Calu3 (cell line): ENCODE measurements at regions of chr4 and their contacts with region 1.

Region 1: DNA sequence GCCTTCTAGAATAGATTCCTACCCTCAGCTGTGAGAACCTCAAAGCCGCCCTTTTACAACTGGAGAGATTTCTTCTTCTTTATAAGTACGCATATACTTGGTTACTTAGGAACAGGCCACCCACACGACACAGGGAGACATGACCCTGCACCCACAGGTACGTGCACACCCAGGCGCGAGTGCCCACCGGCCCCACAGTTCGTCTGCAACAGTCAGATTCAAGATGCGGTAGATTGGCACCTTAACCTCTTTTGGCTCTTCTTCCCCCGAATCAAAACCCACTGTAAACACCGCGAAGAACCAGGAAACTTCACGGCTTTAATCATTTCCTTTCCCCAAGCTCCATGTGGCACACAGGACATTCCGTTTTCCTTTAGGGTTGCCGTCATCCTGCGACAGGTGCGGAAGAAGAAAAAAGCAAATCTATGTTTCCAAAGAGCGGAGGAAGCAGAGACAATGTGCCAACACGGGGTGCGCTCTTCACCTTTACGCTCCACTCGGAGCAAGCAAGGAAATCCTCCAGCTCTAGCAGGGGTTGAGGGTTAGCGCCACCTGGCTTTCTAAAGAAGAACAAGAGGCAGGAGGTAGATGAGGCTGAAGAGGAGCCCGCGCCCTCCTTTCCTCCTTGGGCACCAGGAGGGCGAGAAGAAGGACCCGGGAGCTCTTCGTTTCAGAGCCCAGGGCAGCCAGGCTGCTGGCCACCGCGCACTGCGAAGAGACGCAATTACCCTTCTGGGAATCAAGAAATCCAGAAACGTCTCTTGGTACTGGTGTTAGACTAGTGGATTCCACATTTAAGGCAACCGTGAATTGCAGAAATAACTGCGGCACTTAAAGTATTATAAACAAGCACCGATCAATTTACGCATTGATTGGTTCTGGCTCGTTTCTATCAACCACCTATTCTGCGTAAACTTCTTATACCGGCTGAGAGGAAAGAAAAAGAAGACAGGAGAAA is 35.7 kb downstream of the HAND2 start:
- DNase-seq: peak; percentile 58
- H3K4me3 Mint-ChIP-seq: peak overlapping the region; percentile 79
- H3K27ac Mint-ChIP-seq: no peak overlapping the region
- H3K4me1 Mint-ChIP-seq: peaks cover 14% of the 10 kb centered on the region
- H3K27me3 Mint-ChIP-seq: no peaks in the 10 kb centered on the region
- CTCF ChIP-seq: peak; percentile 71

Region 2: DNA sequence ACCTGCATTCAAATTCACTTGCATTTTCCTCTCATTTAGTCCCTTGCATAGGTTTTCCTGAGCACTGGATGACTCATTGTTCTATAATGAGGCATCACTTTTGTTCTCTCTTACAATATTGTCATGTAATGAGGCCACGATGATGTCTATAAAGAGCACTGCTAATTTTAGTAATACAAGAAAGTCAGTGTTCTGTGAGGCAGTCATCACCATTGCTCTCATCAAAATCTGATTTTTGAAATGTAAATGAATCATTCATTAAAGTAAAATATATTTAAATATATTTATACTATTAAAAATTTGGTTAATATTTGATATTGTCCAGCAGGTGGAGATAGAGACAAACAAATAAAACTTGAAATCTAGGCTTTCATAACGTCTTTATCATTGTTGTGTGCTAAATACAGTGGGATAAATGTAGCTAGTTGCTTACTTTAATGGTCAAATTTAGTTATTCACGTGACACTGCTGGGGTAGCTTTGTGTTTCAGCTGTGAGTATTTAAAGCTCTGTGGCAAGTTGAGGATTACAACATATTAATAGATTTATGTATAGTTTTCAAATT is 175.6 kb before region 1 on chr4:
- CTCF ChIA-PET with region 1: no interaction called
- intact Hi-C with region 1: loop called (anchors 1 kb)
- DNase-seq: no peak
- H3K4me3 Mint-ChIP-seq: no peak overlapping the region
- H3K27ac Mint-ChIP-seq: no peak overlapping the region
- H3K4me1 Mint-ChIP-seq: no peaks in the 10 kb centered on the region
- H3K27me3 Mint-ChIP-seq: no peaks in the 10 kb centered on the region
- CTCF ChIP-seq: peak; percentile 11

Region 3: DNA sequence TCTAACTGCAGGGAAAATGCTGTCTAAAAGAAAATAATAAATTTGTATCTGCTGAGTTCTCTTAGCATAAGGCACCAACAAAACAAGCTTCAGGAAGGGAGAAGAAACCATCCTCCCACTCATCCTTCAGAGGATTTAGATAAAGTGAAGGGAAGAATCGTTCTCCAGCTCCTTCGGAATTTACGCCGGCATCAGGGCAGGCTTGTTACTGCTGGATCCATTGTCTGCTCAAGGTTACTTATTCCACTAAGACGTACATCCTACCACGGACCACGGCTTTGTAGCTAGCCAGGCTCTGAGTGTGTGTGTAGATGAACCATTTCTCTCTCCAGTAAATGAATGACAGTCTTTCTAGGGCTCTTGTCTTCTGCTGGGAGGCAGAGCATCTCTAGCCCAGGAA is 24.7 kb before region 1 on chr4:
- CTCF ChIA-PET with region 1: no interaction called
- intact Hi-C with region 1: no loop called
- DNase-seq: no peak
- H3K4me3 Mint-ChIP-seq: no peak overlapping the region
- H3K27ac Mint-ChIP-seq: no peak overlapping the region
- H3K4me1 Mint-ChIP-seq: no peaks in the 10 kb centered on the region
- H3K27me3 Mint-ChIP-seq: no peaks in the 10 kb centered on the region
- CTCF ChIP-seq: no peak

Region 4: DNA sequence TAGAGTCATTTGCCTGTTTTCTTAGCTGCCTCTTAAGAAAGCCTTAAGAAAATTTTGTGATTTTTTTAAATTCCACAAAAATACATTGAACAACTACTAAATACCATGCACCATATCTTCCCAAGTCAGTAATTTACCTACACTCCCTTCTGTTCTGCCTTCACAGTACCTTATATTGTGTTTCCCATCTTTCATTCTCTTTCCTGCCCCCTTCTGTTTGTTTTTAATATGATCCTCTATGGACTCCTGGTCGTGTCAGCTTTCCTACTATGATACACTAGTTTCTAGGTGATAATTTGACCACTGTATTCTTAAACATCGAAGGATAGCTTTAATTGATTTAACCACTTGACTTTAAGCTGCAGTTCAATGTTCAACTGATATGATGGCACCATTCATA is 333.4 kb after region 1 on chr4:
- CTCF ChIA-PET with region 1: no interaction called
- intact Hi-C with region 1: loop called (anchors 10 kb)
- DNase-seq: no peak
- H3K4me3 Mint-ChIP-seq: no peak overlapping the region
- H3K27ac Mint-ChIP-seq: no peak overlapping the region
- H3K4me1 Mint-ChIP-seq: no peaks in the 10 kb centered on the region
- H3K27me3 Mint-ChIP-seq: peaks cover 14% of the 10 kb centered on the region
- CTCF ChIP-seq: no peak